CD8-positive, alpha-beta T cell (primary cell): ENCODE measurements at regions of chr10 and their contacts with region 1.

Region 1: DNA sequence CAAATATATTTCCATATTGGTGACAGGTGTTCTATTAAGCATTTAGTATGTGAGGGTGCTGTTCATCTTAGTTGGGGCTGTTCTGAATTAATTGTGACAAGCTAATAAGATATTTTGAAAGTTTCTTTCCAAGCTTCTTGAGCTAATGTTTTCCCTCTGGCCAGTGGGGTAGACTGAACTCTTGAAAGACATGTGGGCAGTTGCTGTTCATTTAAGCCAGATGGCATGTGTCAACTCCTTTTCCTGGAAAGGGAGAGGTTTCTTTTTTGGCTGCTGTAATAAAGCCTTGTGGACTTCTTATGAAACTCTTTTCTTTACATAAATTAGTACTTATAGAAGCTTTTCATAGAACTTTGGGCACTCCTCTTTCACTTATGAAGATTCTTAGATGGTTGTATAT is 21.7 kb downstream of the RAB18 start:
- DNase-seq: no peak
- ATAC-seq: no peak
- H3K4me3 ChIP-seq: no peak overlapping the region
- H3K4me3 Mint-ChIP-seq: no peak overlapping the region
- H3K27ac ChIP-seq: no peak overlapping the region
- H3K27ac Mint-ChIP-seq: no peak overlapping the region
- H3K4me1 ChIP-seq: peaks cover 5% of the 10 kb centered on the region
- H3K4me1 Mint-ChIP-seq: peaks cover 78% of the 10 kb centered on the region
- H3K27me3 ChIP-seq: no peaks in the 10 kb centered on the region
- H3K27me3 Mint-ChIP-seq: no peaks in the 10 kb centered on the region
- CTCF ChIP-seq: no peak

Region 2: DNA sequence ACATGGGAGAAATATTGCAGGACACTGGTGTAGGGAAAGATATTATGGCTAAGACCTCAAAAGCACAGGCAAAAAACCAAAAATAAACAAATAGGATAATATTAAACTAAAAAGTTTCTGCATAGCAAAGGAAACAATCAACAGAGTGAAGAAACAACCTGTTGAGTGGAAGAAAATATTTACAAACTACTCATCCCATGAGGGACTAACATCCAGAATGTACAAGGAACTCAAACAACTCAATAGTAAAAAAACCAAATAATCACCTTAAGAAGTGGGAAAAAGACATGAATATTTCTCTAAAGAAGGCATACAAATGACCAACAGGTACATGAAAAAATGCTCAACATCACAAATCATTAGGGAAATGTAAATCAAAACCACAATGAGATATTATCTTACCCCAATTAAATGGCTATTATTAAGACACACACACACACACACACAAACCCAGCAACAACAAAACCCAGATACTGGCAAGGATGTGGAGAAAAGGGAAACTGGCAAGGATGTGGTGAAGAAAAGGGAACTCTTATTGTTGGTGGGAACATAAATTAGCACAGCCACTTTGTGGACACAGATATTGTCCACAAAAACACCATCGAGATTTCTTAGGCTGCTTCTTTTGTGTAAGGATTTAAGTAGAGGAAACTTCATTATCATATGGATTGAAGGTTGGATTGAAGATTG is 31.6 kb before region 1 on chr10:
- CTCF ChIA-PET with region 1: no interaction called
- POLR2A ChIA-PET with region 1: no interaction called
- intact Hi-C with region 1: no loop called
- DNase-seq: no peak
- ATAC-seq: no peak
- H3K4me3 ChIP-seq: no peak overlapping the region
- H3K4me3 Mint-ChIP-seq: no peak overlapping the region
- H3K27ac ChIP-seq: no peak overlapping the region
- H3K27ac Mint-ChIP-seq: no peak overlapping the region
- H3K4me1 ChIP-seq: no peaks in the 10 kb centered on the region
- H3K4me1 Mint-ChIP-seq: no peaks in the 10 kb centered on the region
- H3K27me3 ChIP-seq: no peaks in the 10 kb centered on the region
- H3K27me3 Mint-ChIP-seq: peaks cover 7% of the 10 kb centered on the region
- CTCF ChIP-seq: no peak

Region 3: DNA sequence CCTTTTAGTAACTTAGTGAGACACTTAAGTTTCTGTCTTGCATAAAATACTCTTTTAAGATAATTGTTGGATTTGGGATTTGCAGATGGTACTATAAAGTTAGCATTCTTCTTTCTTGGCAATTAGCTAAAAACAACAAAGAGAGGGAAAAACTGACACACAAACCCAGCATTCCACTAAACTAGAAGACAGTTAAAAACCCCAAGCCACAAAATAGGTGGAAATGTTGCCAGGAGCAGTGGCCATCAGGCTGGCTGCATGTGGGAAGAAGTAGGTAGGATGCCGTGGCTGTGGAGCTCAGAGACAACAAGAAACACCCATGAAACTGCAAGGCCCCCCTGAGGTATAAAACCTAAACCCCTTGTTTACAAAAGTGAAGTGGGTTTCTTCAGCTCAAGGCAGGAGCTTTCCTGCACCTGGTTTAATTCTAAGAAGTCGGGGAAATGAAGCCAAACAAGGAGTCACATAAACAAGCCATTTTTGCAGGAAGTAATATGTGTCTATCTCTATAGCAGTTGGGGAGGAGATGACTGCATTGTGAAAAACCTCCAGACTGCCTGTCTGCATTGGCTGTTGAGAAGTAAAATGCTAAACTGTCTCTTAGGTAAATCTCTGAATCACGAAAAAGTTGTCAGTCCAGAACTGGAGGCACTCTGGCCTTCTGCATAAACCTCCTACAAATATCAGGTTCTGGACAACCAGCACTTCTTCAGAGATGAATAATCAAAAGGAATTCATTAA is 12.2 kb before region 1 on chr10:
- CTCF ChIA-PET with region 1: interaction called, 3 read pairs
- POLR2A ChIA-PET with region 1: no interaction called
- intact Hi-C with region 1: loop called (anchors 2 kb)
- DNase-seq: peak in 1 of 9 experiments; percentile 44
- ATAC-seq: peak; percentile 36
- H3K4me3 ChIP-seq: no peak overlapping the region
- H3K4me3 Mint-ChIP-seq: peak overlapping the region; percentile 42
- H3K27ac ChIP-seq: peak overlapping the region in 1 of 2 experiments; percentile 9
- H3K27ac Mint-ChIP-seq: peak overlapping the region; percentile 80
- H3K4me1 ChIP-seq: peaks cover 27% of the 10 kb centered on the region
- H3K4me1 Mint-ChIP-seq: peaks cover 76% of the 10 kb centered on the region
- H3K27me3 ChIP-seq: no peaks in the 10 kb centered on the region
- H3K27me3 Mint-ChIP-seq: no peaks in the 10 kb centered on the region
- CTCF ChIP-seq: no peak